CD4-positive, alpha-beta memory T cell (primary cell): ENCODE measurements at regions of chr1 and their contacts with region 1.

Region 1: GRCh38 chr1:27643701-27644625 is 9.0 kb upstream of the FGR start:
- DNase-seq: peak; percentile 67 to 74 (median 71)
- H3K4me3 ChIP-seq: no peak overlapping the region
- H3K4me3 Mint-ChIP-seq: peak overlapping the region in 1 of 8 donors; percentile 64
- H3K27ac ChIP-seq: no peak overlapping the region
- H3K27ac Mint-ChIP-seq: peak overlapping the region in 6 of 7 donors; percentile 47 to 90 (median 72)
- H3K4me1 ChIP-seq: peaks cover 12% of the 10 kb centered on the region
- H3K4me1 Mint-ChIP-seq: peaks cover 10 to 22% (median 18%) of the 10 kb centered on the region in 4 donors
- H3K27me3 ChIP-seq: no peaks in the 10 kb centered on the region
- H3K27me3 Mint-ChIP-seq: no peaks in the 10 kb centered on the region

Region 2: DNA sequence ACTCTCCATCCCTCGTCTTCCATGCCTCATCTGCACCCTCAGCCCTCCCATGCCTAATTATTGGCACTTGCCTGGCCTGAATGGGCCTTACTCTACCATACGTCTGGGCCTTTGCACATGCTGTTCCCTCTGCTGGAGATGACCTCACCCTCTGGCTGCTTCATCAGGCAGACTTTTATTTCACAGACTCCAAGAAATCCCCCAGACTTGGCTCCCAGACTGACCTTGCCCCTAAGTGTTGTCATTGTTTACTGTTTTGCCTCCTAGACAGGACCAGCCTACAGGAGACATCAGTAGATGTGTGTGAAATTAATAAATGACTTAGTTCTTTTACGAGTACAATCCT is 34.8 kb before region 1 on chr1:
- CTCF ChIA-PET with region 1: interaction called, 26 read pairs
- POLR2A ChIA-PET with region 1: interaction called, 8 read pairs
- intact Hi-C with region 1: loop called (anchors 1 kb)
- DNase-seq: peak in 1 of 5 donors; percentile 63
- H3K4me3 ChIP-seq: no peak overlapping the region
- H3K4me3 Mint-ChIP-seq: no peak overlapping the region
- H3K27ac ChIP-seq: peak overlapping the region; percentile 1
- H3K27ac Mint-ChIP-seq: no peak overlapping the region
- H3K4me1 ChIP-seq: peaks cover 47% of the 10 kb centered on the region
- H3K4me1 Mint-ChIP-seq: peaks cover 18 to 44% (median 31%) of the 10 kb centered on the region in 4 donors
- H3K27me3 ChIP-seq: no peaks in the 10 kb centered on the region
- H3K27me3 Mint-ChIP-seq: no peaks in the 10 kb centered on the region